RWPE1 (cell line): ENCODE measurements at regions of chr2 and their contacts with region 1.

Region 1: DNA sequence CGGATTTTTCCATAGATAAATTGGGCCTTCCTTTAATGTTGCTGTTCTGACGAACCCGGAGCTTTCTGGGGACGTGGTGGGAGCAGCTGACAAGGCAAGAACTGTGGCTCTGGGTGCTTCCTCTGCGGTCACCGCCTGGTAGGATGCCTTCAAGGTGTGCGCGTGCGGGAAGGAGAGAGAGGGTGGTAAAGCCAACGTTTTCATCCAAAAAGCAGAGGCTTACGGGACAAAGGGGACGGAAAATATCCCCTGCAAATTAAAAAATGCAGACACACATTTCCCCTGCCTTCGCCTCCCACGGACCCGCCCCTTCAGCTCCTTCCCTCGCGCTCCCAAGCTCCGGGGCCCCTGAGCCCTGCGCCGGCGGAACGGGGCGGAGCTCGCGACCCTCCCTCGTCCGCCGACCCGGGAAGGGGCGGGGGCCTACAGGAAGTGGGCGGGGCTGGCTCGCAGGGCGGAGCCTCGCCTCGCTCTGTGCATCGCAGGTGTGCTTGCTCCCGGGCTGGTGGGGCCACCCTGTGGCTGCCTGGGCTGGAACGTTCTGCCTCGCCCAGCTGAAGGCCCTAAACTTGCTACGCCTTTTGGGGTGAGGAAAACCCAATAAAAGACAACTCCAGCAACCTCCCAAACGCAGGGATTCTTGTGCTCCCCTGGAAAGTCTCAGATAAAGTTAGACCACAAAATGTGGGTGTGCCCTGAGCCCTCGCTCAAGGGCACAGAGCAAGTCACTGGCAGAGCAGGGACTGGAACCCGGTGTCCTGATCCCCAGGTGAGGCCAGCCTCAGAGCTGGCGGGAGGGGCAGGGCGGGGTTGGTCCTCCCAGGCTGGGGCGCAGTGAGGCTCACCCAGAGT is 25.4 kb upstream of the SLC66A3 start:
- DNase-seq: peak; percentile 57
- H3K27ac ChIP-seq: peak overlapping the region; percentile 33
- CTCF ChIP-seq: peak; percentile 44

Region 2: DNA sequence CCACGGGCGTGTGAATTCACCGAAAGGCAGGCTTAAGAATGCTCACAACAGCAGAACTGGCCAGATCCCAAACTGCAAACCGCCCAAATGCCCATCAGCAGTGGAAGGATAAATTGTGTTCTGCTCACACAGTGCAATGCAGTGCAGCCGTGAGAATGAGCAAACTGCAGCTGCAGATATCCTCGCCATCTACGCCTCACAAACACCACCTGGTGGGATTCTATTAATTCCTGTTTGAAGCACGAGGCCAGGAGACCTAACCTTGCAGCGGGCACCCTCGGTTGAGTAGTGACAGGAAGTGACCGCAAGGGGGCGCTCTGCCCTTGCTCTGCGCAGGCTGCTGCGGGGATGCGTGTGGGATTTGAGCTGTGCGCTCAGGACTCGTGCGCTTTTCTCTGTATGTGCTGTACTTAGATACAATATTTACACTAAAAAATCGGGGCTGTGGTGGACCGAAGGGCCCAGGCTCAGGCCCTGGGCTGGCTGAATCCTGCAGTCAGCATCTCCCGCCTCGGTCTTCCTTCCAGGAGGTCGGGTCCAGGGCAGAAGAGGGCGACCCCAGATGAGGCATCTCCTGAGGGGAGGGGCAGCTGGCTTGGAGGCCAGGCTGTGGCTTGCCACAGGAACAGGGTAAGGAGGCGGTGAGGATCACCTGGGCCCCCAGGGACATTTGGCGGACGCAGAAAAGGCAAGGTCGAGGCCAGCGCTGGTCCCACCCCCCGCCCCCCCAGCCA is 297.5 kb before region 1 on chr2:
- CTCF ChIA-PET with region 1: interaction called, 51 read pairs
- POLR2A ChIA-PET with region 1: no interaction called
- DNase-seq: peak; percentile 82
- H3K27ac ChIP-seq: no peak overlapping the region
- CTCF ChIP-seq: peak; percentile 97

Region 3: GRCh38 chr2:11411768-11412448 is 282.1 kb after region 1 on chr2:
- CTCF ChIA-PET with region 1: interaction called, 11 read pairs
- POLR2A ChIA-PET with region 1: no interaction called
- DNase-seq: peak; percentile 43
- H3K27ac ChIP-seq: no peak overlapping the region
- CTCF ChIP-seq: peak; percentile 76

Region 4: GRCh38 chr2:11583840-11584524 is 454.2 kb after region 1 on chr2:
- CTCF ChIA-PET with region 1: interaction called, 12 read pairs
- POLR2A ChIA-PET with region 1: no interaction called
- DNase-seq: peak; percentile 91
- H3K27ac ChIP-seq: no peak overlapping the region
- CTCF ChIP-seq: peak; percentile 71